MCF 10A (cell line): ENCODE measurements at regions of chr18 and their contacts with region 1.

Region 1: GRCh38 chr18:74652392-74652988 is 54.8 kb downstream of the ZNF407 start:
- DNase-seq: peak; percentile 54
- H3K4me3 Mint-ChIP-seq: no peak overlapping the region
- H3K27ac Mint-ChIP-seq: no peak overlapping the region
- H3K4me1 Mint-ChIP-seq: no peaks in the 10 kb centered on the region
- H3K27me3 Mint-ChIP-seq: no peaks in the 10 kb centered on the region
- CTCF ChIP-seq: peak; percentile 38

Region 2: DNA sequence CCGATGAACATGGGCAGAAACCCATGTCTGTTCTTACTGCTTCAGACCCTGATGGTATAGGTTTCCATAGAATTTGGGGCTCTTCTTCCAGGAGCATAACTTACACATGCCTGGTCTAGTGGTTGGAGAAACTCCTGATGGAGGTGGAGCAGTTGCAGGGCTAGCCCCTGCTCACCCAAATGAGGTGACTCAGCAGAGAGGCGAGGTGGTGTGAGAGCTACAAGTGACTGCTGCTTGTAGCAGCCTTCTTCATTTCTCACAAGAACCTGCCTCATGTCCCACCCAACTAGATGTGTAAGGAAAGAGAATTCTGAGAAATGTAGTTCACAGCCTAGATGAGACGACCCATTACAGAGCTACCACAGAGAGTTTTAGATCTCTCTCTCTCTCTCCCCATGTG is 50.5 kb after region 1 on chr18:
- CTCF ChIA-PET with region 1: no interaction called
- POLR2A ChIA-PET with region 1: no interaction called
- intact Hi-C with region 1: no loop called
- DNase-seq: peak; percentile 10
- H3K4me3 Mint-ChIP-seq: no peak overlapping the region
- H3K27ac Mint-ChIP-seq: no peak overlapping the region
- H3K4me1 Mint-ChIP-seq: no peaks in the 10 kb centered on the region
- H3K27me3 Mint-ChIP-seq: no peaks in the 10 kb centered on the region
- CTCF ChIP-seq: no peak

Region 3: GRCh38 chr18:74748809-74749208 is 96.3 kb after region 1 on chr18:
- CTCF ChIA-PET with region 1: no interaction called
- POLR2A ChIA-PET with region 1: no interaction called
- intact Hi-C with region 1: no loop called
- DNase-seq: no peak
- H3K4me3 Mint-ChIP-seq: no peak overlapping the region
- H3K27ac Mint-ChIP-seq: no peak overlapping the region
- H3K4me1 Mint-ChIP-seq: peaks cover 9% of the 10 kb centered on the region
- H3K27me3 Mint-ChIP-seq: no peaks in the 10 kb centered on the region
- CTCF ChIP-seq: no peak

Region 4: GRCh38 chr18:74896390-74896991 is 244.0 kb after region 1 on chr18:
- CTCF ChIA-PET with region 1: interaction called, 4 read pairs
- POLR2A ChIA-PET with region 1: no interaction called
- intact Hi-C with region 1: loop called (anchors 1 kb)
- DNase-seq: peak; percentile 60
- H3K4me3 Mint-ChIP-seq: no peak overlapping the region
- H3K27ac Mint-ChIP-seq: no peak overlapping the region
- H3K4me1 Mint-ChIP-seq: peaks cover 19% of the 10 kb centered on the region
- H3K27me3 Mint-ChIP-seq: no peaks in the 10 kb centered on the region
- CTCF ChIP-seq: peak; percentile 52

Region 5: GRCh38 chr18:75041586-75041985 is 389.1 kb after region 1 on chr18:
- CTCF ChIA-PET with region 1: interaction called, 29 read pairs
- POLR2A ChIA-PET with region 1: no interaction called
- intact Hi-C with region 1: loop called (anchors 2 kb)
- DNase-seq: peak; percentile 36
- H3K4me3 Mint-ChIP-seq: no peak overlapping the region
- H3K27ac Mint-ChIP-seq: no peak overlapping the region
- H3K4me1 Mint-ChIP-seq: no peaks in the 10 kb centered on the region
- H3K27me3 Mint-ChIP-seq: no peaks in the 10 kb centered on the region
- CTCF ChIP-seq: peak; percentile 32

Region 6: DNA sequence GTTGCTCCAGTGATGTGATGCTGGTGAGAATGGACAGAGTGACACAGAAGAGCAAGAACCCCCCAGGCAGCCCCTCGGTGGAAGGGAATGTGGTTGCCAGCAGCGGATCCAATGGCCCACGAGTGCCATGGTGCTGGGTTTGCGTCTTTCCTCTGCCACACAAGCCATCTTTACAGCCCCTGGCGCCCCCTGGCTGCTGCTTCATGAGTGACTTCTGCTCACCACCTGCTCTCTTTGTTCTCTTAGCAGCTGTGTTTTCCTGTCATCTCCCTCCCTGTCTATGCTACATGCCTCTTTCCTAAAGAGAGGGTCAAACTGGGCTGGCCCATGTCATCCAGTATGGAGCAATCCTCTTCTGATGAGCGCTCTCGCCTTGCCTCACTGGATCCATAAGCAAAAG is 1075.0 kb after region 1 on chr18:
- CTCF ChIA-PET with region 1: no interaction called
- POLR2A ChIA-PET with region 1: no interaction called
- intact Hi-C with region 1: loop called (anchors 5 kb)
- DNase-seq: peak; percentile 69
- H3K4me3 Mint-ChIP-seq: no peak overlapping the region
- H3K27ac Mint-ChIP-seq: no peak overlapping the region
- H3K4me1 Mint-ChIP-seq: no peaks in the 10 kb centered on the region
- H3K27me3 Mint-ChIP-seq: no peaks in the 10 kb centered on the region
- CTCF ChIP-seq: peak; percentile 45

Region 7: GRCh38 chr18:76259096-76259495 is 1606.6 kb after region 1 on chr18:
- CTCF ChIA-PET with region 1: no interaction called
- POLR2A ChIA-PET with region 1: no interaction called
- intact Hi-C with region 1: loop called (anchors 5 kb)
- DNase-seq: no peak
- H3K4me3 Mint-ChIP-seq: no peak overlapping the region
- H3K27ac Mint-ChIP-seq: no peak overlapping the region
- H3K4me1 Mint-ChIP-seq: no peaks in the 10 kb centered on the region
- H3K27me3 Mint-ChIP-seq: no peaks in the 10 kb centered on the region
- CTCF ChIP-seq: no peak